ENCODE measurements at regions of chr6 and their contacts with region 1.

Region 1: DNA sequence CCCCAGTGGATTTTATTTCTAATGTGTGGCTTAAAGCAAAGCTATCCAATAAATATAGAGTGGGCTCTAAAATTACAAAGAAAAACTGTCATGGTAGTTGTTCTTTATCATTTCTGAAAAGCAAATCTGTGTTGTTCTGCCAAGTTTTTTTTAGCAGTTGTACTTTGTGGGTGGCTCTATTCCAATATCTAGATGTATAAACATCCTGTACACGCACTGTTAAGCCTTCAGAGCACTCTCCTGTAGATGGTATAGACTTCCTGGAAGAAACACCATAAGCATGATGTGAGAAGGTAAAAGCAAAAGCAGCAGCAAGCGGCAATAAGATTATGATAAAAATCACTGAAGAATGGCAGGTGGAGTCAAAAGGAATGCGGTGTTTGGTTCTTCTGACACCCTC is 21.5 kb upstream of the TMEM30A start:
- DNase-seq: no peak
- ATAC-seq: peak in 3 of 4 donors; percentile 43 to 46 (median 45)
- H3K4me3 ChIP-seq: no peak overlapping the region
- H3K27ac ChIP-seq: peak overlapping the region in 1 of 12 donors; percentile 36
- H3K4me1 ChIP-seq: peaks cover 0 to 23% (median under 1%) of the 10 kb centered on the region in 12 donors
- H3K27me3 ChIP-seq: no peaks in the 10 kb centered on the region
- CTCF ChIP-seq: no peak
- POLR2A ChIP-seq: no peak

Region 2: GRCh38 chr6:75065523-75065922 is 240.5 kb before region 1 on chr6:
- intact Hi-C with region 1: no loop called
- DNase-seq: peak in 2 of 5 donors; percentile 19 to 38
- ATAC-seq: peak in 2 of 4 donors; percentile 20 to 54
- H3K4me3 ChIP-seq: no peak overlapping the region
- H3K27ac ChIP-seq: no peak overlapping the region
- H3K4me1 ChIP-seq: peaks cover 0 to 4% (median 0%) of the 10 kb centered on the region in 12 donors
- H3K27me3 ChIP-seq: no peaks in the 10 kb centered on the region
- CTCF ChIP-seq: peak in 3 of 12 donors; percentile 22 to 33 (median 31)
- POLR2A ChIP-seq: no peak

Region 3: GRCh38 chr6:75349262-75349984 is 43.4 kb after region 1 on chr6:
- intact Hi-C with region 1: loop called in 2 of 10 experiments (anchors 5 kb)
- DNase-seq: peak in 4 of 5 donors; percentile 42 to 63 (median 44)
- ATAC-seq: peak; percentile 32 to 68 (median 54)
- H3K4me3 ChIP-seq: peak overlapping the region in 9 of 12 donors; percentile 21 to 50 (median 34)
- H3K27ac ChIP-seq: peak overlapping the region in 10 of 12 donors; percentile 11 to 63 (median 40)
- H3K4me1 ChIP-seq: peaks cover 0 to 30% (median 18%) of the 10 kb centered on the region in 12 donors
- H3K27me3 ChIP-seq: no peaks in the 10 kb centered on the region
- CTCF ChIP-seq: peak in 3 of 12 donors; percentile 7 to 29 (median 23)
- POLR2A ChIP-seq: no peak